Activated CD4-positive, alpha-beta memory T cell treated with anti-CD3 and anti-CD28 coated beads for 36 hours (primary cell): ENCODE measurements at regions of chr5 and their contacts with region 1.

Region 1: GRCh38 chr5:149828161-149828884 is 98.2 kb downstream of the PPARGC1B start:
- DNase-seq: peak; percentile 88
- H3K4me3 Mint-ChIP-seq: no peak overlapping the region
- H3K27ac Mint-ChIP-seq: no peak overlapping the region
- H3K4me1 Mint-ChIP-seq: peaks cover 5% of the 10 kb centered on the region
- H3K27me3 Mint-ChIP-seq: no peaks in the 10 kb centered on the region

Region 2: DNA sequence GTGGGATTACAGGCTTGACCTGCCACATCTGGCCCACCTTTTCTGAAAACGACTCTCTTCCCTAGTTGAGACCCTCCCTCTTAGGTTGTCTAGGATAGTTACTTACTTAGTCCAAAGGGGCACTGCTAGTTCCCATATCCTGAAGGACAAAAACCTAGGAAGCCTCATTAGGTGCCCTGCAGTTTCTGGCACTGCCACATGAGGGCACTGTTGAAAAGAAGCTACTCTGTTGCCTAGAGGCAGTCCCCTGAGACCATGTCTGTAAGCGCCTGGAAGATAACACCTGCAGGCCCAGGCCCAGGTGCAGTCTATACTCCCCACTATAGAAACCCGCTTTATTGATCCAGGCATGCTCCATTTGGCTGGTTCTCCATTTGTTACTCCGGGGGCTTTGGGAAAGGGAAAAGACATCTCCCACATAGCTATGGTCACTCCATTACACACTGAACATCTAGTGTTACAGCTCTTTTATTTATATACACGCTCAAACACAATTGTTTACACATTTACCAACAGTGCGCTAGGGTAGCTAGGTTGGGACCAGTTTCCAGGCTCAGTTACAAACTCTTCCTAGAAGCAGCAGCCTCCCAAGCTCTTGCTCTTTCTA is 171.6 kb before region 1 on chr5:
- CTCF ChIA-PET with region 1: interaction called, 11 read pairs
- POLR2A ChIA-PET with region 1: no interaction called
- intact Hi-C with region 1: loop called (anchors 1 kb)
- DNase-seq: peak; percentile 57
- H3K4me3 Mint-ChIP-seq: peak overlapping the region; percentile 16
- H3K27ac Mint-ChIP-seq: no peak overlapping the region
- H3K4me1 Mint-ChIP-seq: no peaks in the 10 kb centered on the region
- H3K27me3 Mint-ChIP-seq: peaks cover 6% of the 10 kb centered on the region

Region 3: DNA sequence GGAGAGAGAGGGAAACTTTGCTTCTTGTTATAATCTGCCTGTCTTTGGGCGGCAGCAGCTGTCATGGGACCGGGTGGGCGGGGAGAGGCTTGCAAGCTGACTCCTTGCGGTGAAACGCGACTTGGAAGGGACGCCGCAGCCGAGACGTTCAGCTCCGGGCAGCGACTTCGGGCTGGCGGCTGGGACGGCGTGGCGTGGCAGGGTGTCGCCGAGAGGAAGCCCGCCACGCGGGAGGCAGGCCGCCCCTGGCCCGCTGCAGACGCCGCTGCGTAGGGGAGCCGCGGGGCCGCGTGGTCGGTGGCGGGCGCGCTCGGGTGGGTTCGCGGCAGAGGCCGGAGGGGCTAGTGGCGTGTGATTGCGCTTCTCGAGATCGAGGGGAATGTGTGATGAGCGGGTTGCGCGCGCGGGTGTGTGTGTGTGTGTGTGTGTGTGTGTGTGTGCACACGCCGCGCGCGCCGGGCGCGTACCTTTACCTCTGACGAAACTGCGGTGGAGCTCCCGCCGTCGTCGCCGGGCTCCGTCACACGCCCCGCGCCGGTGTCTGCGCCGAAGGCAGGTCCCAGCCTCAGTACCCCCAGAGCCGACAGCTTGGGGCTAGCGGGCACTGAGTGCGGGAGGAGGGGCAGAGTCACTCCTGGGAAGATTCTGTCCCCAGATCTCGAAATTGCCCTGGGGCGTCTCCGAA is 96.5 kb before region 1 on chr5:
- CTCF ChIA-PET with region 1: interaction called, 4 read pairs
- POLR2A ChIA-PET with region 1: no interaction called
- intact Hi-C with region 1: loop called (anchors 1 kb)
- DNase-seq: peak; percentile 89
- H3K4me3 Mint-ChIP-seq: peak overlapping the region; percentile 77
- H3K27ac Mint-ChIP-seq: no peak overlapping the region
- H3K4me1 Mint-ChIP-seq: peaks cover 3% of the 10 kb centered on the region
- H3K27me3 Mint-ChIP-seq: no peaks in the 10 kb centered on the region

Region 4: GRCh38 chr5:149852641-149853330 is 24.5 kb after region 1 on chr5:
- CTCF ChIA-PET with region 1: interaction called, 76 read pairs
- POLR2A ChIA-PET with region 1: no interaction called
- intact Hi-C with region 1: no loop called
- DNase-seq: peak; percentile 61
- H3K4me3 Mint-ChIP-seq: no peak overlapping the region
- H3K27ac Mint-ChIP-seq: no peak overlapping the region
- H3K4me1 Mint-ChIP-seq: no peaks in the 10 kb centered on the region
- H3K27me3 Mint-ChIP-seq: no peaks in the 10 kb centered on the region

Region 5: DNA sequence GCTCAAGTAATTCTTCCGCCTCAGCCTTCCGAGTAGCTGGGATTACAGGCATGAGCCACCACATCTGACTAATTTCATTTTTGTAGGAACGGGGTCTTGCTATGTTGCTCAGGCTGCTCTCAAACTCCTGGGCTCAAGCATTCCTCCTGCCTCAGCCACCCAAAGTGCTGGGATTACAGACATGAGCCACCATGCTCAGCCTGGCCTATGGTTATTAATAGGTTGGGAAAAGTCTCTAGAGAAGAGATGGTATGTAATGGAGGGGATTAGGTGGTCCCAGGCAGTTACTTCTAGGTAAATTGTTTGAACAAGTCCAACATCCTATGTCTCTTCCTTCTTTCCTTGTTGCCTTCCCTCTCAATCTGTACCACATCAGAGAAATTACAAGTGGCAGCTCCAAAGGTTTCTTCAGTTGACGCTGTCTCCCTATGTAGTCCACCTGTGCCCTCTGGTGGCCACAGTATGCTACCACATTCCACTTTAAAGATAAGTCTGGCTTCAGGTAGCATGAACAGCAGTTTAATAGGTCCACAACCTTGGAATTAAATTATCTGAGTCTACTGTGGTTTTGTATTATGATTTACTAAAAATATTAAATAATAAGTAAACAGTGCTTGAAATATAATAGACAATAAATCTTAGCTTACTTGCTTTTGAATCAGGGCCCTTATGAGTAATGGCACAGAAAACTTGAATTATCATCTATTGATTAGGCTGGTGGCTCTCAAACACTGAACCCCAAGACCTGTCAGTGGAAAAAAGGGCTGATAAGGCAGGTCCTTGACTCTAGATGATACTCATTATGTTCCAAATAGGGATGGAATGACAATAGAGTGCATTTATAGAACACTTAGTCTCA is 162.4 kb after region 1 on chr5:
- CTCF ChIA-PET with region 1: interaction called, 269 read pairs
- POLR2A ChIA-PET with region 1: no interaction called
- intact Hi-C with region 1: no loop called
- DNase-seq: peak; percentile 76
- H3K4me3 Mint-ChIP-seq: no peak overlapping the region
- H3K27ac Mint-ChIP-seq: no peak overlapping the region
- H3K4me1 Mint-ChIP-seq: no peaks in the 10 kb centered on the region
- H3K27me3 Mint-ChIP-seq: no peaks in the 10 kb centered on the region

Region 6: GRCh38 chr5:150058480-150059126 is 230.3 kb after region 1 on chr5:
- CTCF ChIA-PET with region 1: no interaction called
- POLR2A ChIA-PET with region 1: no interaction called
- intact Hi-C with region 1: no loop called
- DNase-seq: no peak
- H3K4me3 Mint-ChIP-seq: no peak overlapping the region
- H3K27ac Mint-ChIP-seq: no peak overlapping the region
- H3K4me1 Mint-ChIP-seq: no peaks in the 10 kb centered on the region
- H3K27me3 Mint-ChIP-seq: no peaks in the 10 kb centered on the region